Thyroid gland (tissue), 4 donors: ENCODE measurements at regions of chr16 and their contacts with region 1.

Region 1: GRCh38 chr16:73172241-73172972 is 124.5 kb upstream of the ZFHX3 start:
- DNase-seq: peak; percentile 70 to 76
- H3K4me3 ChIP-seq: no peak overlapping the region
- H3K27ac ChIP-seq: peak overlapping the region; percentile 12 to 65 (median 29)
- H3K4me1 ChIP-seq: peaks cover 6 to 22% of the 10 kb centered on the region in 2 donors
- H3K27me3 ChIP-seq: no peaks in the 10 kb centered on the region
- CTCF ChIP-seq: peak in 4 of 6 experiments; percentile 1 to 64 (median 28)
- POLR2A ChIP-seq: no peak

Region 2: DNA sequence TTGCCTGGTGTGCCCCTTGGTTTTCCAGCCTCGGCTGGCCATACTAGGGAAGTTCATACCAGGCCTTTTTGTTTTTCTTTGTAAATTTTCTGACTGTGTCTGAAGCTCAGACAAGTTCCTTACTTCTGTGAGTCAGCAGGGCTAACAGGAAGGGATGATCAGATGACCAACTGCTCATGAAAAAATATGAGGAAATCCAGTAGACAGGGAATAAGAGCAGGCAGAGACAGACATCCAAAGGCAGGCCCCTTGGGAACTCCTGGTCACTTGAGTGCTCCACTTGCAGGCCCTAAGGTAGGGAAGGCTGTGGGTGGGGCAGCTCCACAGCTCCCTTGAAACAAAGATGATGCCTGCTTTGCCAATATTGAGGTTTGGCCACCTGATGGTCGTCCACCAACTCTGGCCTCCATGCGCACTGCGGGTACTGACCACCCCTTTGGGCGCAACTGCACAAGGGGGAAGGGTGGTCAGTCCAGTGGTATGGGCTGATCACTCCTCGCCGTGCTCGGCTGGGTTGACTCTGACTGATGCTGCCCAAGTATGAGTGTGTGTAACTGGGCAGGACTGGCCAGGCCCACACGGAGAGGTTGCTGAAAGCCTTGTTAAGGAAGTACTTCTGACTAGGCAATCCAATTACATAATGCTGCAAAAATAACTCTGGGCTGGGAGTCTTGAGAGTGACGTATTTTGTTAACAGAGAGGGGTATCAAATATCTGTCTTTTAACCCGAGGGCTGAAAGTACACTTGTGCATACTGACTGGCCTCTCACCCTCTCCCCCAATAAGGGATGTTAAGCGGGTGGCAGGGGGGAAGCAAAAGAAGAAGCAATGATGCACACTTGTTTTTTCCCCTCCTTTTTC is 103.6 kb before region 1 on chr16:
- intact Hi-C with region 1: loop called (anchors 10 kb)
- DNase-seq: peak; percentile 94 to 95
- H3K4me3 ChIP-seq: no peak overlapping the region
- H3K27ac ChIP-seq: peak overlapping the region; percentile 80 to 97 (median 92)
- H3K4me1 ChIP-seq: peaks cover 54 to 63% of the 10 kb centered on the region in 2 donors
- H3K27me3 ChIP-seq: no peaks in the 10 kb centered on the region
- CTCF ChIP-seq: peak in 1 of 6 experiments; percentile 5
- POLR2A ChIP-seq: peak; percentile 72 to 89

Region 3: GRCh38 chr16:73213732-73214455 is 41.5 kb after region 1 on chr16:
- intact Hi-C with region 1: no loop called
- DNase-seq: no peak
- H3K4me3 ChIP-seq: no peak overlapping the region
- H3K27ac ChIP-seq: peak overlapping the region in 1 of 3 donors; percentile 3
- H3K4me1 ChIP-seq: peaks cover 15 to 36% of the 10 kb centered on the region in 2 donors
- H3K27me3 ChIP-seq: no peaks in the 10 kb centered on the region
- CTCF ChIP-seq: no peak
- POLR2A ChIP-seq: no peak

Region 4: DNA sequence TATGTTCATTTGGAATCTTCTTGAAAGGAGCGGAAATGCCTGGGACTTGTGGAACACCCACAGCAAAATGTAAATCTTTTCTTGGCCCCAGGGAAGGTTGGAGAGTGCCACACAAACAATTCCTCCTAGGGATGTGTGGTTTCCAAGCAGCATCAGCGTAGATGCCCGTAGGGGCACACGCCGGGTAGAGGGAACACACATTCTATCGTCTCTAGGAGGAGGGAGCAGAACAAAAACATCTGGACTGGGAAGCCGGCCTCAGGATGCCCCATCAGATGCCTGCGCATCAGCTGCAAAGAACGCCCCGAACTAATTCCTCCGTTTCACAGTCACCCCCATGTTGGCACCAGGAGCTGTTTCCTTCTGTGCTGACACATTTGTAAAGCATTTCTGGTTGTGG is 233.4 kb after region 1 on chr16:
- intact Hi-C with region 1: no loop called
- DNase-seq: no peak
- H3K4me3 ChIP-seq: no peak overlapping the region
- H3K27ac ChIP-seq: no peak overlapping the region
- H3K4me1 ChIP-seq: no peaks in the 10 kb centered on the region
- H3K27me3 ChIP-seq: no peaks in the 10 kb centered on the region
- CTCF ChIP-seq: no peak
- POLR2A ChIP-seq: no peak